Caco-2 (cell line): ENCODE measurements at regions of chr4 and their contacts with region 1.

Region 1: DNA sequence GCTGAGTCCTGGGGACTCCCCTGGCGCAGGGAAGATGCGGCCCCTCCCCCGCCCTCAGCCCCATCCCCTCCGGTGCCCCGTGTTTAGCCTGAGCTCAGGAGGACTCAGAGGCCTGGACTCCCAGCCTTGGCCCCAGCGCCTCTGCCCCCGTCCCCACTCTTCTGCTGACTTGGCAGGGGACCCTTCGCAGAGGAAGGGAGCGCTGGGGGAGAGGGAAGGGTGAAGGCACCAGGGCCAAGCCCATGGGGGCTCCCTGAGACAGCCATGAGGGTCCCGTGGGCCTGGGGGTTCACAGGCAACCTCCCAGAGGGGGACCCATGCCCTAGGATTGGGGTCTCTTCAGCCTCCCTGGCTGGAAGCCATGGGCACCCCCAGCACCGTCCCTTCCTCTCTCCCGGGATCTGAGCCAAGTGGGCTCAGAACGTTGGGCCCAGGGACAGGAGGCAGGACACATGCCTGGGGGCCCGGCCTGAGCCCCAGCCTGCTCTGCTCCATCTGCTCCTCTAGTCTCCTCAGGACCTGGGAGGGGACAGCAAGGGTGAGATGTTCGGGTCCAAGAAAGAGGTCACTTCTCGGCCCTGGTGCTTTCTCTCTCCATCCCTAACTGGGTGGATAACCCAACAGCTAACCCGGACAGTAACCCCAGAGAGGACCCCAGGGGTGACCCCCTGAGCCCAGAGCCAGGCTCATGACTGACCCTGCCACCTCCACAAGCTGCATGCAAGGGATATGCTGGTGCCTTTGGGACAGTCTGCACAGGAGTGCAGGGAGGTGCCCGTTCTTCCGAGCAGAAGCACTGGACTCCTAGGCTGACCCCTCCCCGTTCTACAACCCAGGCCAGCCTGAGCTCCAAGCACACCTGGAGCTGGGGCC is 1.5 kb upstream of the CPLX1 start:
- DNase-seq: peak in 1 of 2 experiments; percentile 32
- H3K4me3 ChIP-seq: peak overlapping the region; percentile 30; the same call in 1 of the 2 replicates
- H3K4me3 Mint-ChIP-seq: peak overlapping the region; percentile 40
- H3K27ac Mint-ChIP-seq: no peak overlapping the region
- H3K4me1 ChIP-seq: peaks cover 4% of the 10 kb centered on the region; the same call in 1 of the 2 replicates
- H3K4me1 Mint-ChIP-seq: no peaks in the 10 kb centered on the region
- H3K27me3 ChIP-seq: no peaks in the 10 kb centered on the region
- H3K27me3 Mint-ChIP-seq: peaks cover 4% of the 10 kb centered on the region
- CTCF ChIP-seq: no peak

Region 2: GRCh38 chr4:705278-706082 is 122.0 kb before region 1 on chr4 and contains the start of gene PCGF3:
- CTCF ChIA-PET with region 1: no interaction called
- POLR2A ChIA-PET with region 1: no interaction called
- intact Hi-C with region 1: no loop called
- DNase-seq: peak; percentile 97
- H3K4me3 ChIP-seq: peak within 1 kb of the TSS; percentile 87
- H3K4me3 Mint-ChIP-seq: peak within 1 kb of the TSS; percentile 81
- H3K27ac Mint-ChIP-seq: peak within 1 kb of the TSS; percentile 66
- H3K4me1 ChIP-seq: no peaks in the 10 kb centered on the region
- H3K4me1 Mint-ChIP-seq: no peaks in the 10 kb centered on the region
- H3K27me3 ChIP-seq: no peaks in the 10 kb centered on the region
- H3K27me3 Mint-ChIP-seq: no peaks in the 10 kb centered on the region
- CTCF ChIP-seq: no peak
- total RNA-seq, gene PCGF3: 36.6 and 38.0 TPM in 2 replicates

Region 3: DNA sequence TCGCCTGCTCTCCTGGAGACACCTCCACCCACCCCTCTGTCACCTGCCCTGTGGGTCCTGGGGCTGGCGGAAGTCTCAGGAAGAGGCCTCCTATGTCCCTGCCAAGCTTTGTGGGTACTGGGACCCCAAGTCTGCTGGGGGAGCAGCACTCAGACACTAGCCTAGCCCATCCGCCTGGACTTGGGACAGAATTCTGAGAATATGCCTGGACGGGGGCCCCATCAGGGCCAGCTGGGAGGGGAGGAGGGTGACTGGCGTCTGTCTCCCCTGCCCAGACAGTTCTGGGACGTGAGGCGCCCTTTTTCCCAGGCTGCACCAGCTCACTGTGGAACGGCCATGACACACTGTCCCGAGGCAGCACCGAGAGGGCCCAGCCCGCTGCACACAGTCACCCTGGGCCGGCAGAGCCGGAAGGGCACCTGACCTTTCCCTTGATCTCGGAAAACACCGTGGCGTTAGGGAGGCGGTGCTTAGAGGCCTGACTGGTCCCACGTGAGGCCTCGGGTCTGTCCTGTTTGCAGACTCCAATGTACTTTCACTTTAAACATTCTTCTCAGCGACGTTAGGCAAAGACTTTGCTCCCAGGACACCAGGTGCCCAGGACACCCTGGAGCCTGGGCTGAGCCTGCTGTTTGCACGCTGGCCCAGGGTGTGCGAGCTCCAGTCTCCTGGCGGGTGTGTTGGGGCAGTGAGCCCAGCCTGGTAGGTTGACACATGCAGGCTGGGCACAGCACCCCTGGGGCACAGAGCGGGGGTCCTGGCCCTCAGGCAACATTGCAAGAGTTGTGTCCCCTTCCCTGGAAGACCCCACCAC is 165.1 kb after region 1 on chr4:
- CTCF ChIA-PET with region 1: interaction called, 7 read pairs
- POLR2A ChIA-PET with region 1: interaction called, 12 read pairs
- intact Hi-C with region 1: no loop called
- DNase-seq: peak; percentile 93 to 95
- H3K4me3 ChIP-seq: peak overlapping the region; percentile 42
- H3K4me3 Mint-ChIP-seq: peak overlapping the region; percentile 71
- H3K27ac Mint-ChIP-seq: peak overlapping the region; percentile 88
- H3K4me1 ChIP-seq: peaks cover 48% of the 10 kb centered on the region
- H3K4me1 Mint-ChIP-seq: no peaks in the 10 kb centered on the region
- H3K27me3 ChIP-seq: no peaks in the 10 kb centered on the region
- H3K27me3 Mint-ChIP-seq: no peaks in the 10 kb centered on the region
- CTCF ChIP-seq: no peak